GM12878 (cell line): ENCODE measurements at regions of chr1 and their contacts with region 1.

Region 1: GRCh38 chr1:200837931-200838571 is 34.7 kb upstream of the GPR25 start:
- DNase-seq: no peak
- ATAC-seq: 0 out of 3 replicates have a peak, but pooled peaks have one; percentile 42
- H3K4me3 ChIP-seq: no peak overlapping the region
- H3K27ac ChIP-seq: no peak overlapping the region
- H3K4me1 ChIP-seq: no peaks in the 10 kb centered on the region
- H3K27me3 ChIP-seq: no peaks in the 10 kb centered on the region
- CTCF ChIP-seq: peak in 1 of 3 experiments; percentile 2; a peak in 2 of 6 replicates
- EP300 ChIP-seq: no peak
- POLR2A ChIP-seq: no peak
- RAD21 ChIP-seq: peak; percentile 28; the same call in 1 of the 2 replicates

Region 2: DNA sequence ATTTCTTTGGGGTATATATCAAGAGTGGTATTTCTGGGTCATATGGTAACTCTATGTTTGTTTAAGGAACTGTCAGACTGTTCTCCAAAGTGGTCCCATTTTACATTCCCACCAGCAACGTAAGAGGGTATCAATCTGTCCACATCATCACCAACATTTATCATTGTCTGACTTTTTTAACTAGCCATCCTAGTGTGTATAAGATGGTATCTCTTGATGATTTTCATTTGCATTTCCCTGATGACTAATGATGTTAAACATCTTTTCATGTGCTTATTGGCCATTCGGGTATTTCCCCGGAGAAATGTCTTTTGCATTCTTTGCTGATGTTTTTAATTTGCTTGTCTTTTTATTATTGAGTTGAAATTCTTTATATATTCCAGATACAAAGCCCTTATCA is 1180.6 kb before region 1 on chr1:
- CTCF ChIA-PET with region 1: no interaction called
- POLR2A ChIA-PET with region 1: no interaction called
- RAD21 ChIA-PET with region 1: no interaction called
- SMC1A ChIA-PET with region 1: no interaction called
- in situ Hi-C with region 1: no loop called
- intact Hi-C with region 1: no loop called
- DNase-seq: no peak
- ATAC-seq: no peak
- H3K4me3 ChIP-seq: no peak overlapping the region
- H3K27ac ChIP-seq: no peak overlapping the region
- H3K4me1 ChIP-seq: no peaks in the 10 kb centered on the region
- H3K27me3 ChIP-seq: no peaks in the 10 kb centered on the region
- CTCF ChIP-seq: no peak
- EP300 ChIP-seq: no peak
- POLR2A ChIP-seq: no peak
- RAD21 ChIP-seq: no peak

Region 3: DNA sequence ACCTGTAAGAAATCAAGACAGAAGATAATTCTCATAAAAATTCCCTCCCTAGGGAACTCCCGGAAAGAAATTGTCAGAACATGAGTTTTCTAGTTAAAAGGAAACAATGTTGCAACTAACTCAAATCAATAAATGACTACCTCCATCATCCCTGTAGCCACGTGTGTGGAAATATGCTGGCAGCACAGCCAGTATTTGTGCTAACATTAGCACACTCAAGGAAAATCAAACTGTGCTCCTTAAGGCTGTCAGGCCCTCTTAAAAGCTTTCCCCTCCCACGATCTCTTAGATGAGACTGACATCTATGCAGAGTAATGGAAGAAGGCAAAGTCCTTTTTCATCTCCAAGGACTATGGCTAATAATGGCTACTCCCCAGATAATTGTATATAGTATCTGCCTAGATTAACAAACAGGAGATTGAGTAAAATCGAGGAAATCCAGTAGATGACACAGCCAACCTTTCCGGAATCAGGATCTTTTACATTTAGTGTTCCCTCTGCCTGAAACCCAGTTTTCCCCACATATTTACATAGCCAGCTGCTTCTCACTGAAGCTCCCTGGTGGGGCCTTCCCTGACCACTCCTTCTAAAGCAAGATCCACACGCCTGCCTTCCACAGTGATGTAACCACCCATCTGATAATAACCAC is 861.4 kb before region 1 on chr1:
- CTCF ChIA-PET with region 1: no interaction called
- POLR2A ChIA-PET with region 1: interaction called, 11 read pairs
- RAD21 ChIA-PET with region 1: no interaction called
- SMC1A ChIA-PET with region 1: no interaction called
- in situ Hi-C with region 1: no loop called
- intact Hi-C with region 1: no loop called
- DNase-seq: no peak
- ATAC-seq: no peak; the same call in 1 of the 3 replicates
- H3K4me3 ChIP-seq: no peak overlapping the region
- H3K27ac ChIP-seq: no peak overlapping the region
- H3K4me1 ChIP-seq: peaks cover 6% of the 10 kb centered on the region
- H3K27me3 ChIP-seq: peaks cover 0 to 3% of the 10 kb centered on the region in 2 experiments; a peak in 2 of 4 replicates
- CTCF ChIP-seq: no peak
- EP300 ChIP-seq: no peak
- POLR2A ChIP-seq: no peak
- RAD21 ChIP-seq: no peak

Region 4: GRCh38 chr1:200856716-200857352 is 18.8 kb after region 1 on chr1:
- CTCF ChIA-PET with region 1: interaction called, 6 read pairs
- POLR2A ChIA-PET with region 1: interaction called, 3 read pairs
- RAD21 ChIA-PET with region 1: interaction called, 3 read pairs
- SMC1A ChIA-PET with region 1: interaction called, 12 read pairs
- in situ Hi-C with region 1: no loop called
- intact Hi-C with region 1: no loop called
- DNase-seq: no peak
- ATAC-seq: no peak; the same call in 2 of the 3 replicates
- H3K4me3 ChIP-seq: no peak overlapping the region
- H3K27ac ChIP-seq: no peak overlapping the region
- H3K4me1 ChIP-seq: peaks cover 3% of the 10 kb centered on the region
- H3K27me3 ChIP-seq: no peaks in the 10 kb centered on the region
- CTCF ChIP-seq: no peak
- EP300 ChIP-seq: no peak
- POLR2A ChIP-seq: no peak
- RAD21 ChIP-seq: no peak

Region 5: DNA sequence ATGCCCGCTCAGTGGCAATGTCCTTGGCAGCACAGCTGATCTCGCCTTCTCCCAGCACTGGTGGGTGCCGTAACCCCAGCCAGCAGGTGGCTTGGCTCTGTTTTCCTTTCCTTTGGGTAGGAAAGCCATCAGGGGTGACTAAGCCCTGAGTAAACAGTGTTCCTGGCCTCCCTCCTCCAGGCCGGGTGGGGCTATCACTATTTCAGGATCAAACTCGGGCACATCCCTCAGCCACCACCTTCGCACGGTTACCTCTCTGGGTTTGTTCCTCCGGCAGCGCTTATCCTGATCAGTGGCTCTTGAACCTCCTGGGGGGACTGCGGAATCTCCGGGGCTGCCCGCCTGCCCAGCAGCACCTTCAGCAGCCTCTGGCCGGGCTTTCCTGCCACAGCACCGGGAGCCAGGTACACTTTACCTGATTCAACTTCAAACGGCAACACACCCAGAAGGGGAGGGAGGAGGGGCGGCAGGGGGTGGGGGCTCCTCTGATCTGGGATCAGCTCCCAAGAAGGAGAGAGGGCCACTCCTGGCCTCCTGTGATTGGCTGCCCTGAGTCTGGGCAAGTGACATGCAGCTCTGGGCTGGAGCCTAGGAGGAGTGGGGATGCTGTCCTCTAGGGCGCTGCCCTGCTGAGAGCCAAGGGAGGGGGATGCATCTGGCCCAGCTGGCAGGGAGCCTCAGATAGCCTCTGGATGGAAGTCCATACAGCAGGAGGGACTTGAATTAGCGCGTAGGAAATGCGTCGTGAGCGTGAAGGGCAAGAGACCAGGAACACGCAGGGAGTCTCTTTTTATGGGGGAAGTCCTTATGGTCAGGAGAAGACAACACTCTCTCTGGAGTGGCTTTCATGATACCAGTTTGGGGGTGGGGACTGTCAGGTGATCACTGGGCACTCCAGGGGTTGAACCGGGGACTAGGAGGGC is 289.0 kb after region 1 on chr1 and contains the start of gene ASCL5:
- CTCF ChIA-PET with region 1: no interaction called
- POLR2A ChIA-PET with region 1: no interaction called
- RAD21 ChIA-PET with region 1: no interaction called
- SMC1A ChIA-PET with region 1: no interaction called
- in situ Hi-C with region 1: no loop called
- intact Hi-C with region 1: no loop called
- DNase-seq: no peak
- ATAC-seq: no peak
- H3K4me3 ChIP-seq: no peak within 1 kb of the TSS
- H3K27ac ChIP-seq: no peak within 1 kb of the TSS
- H3K4me1 ChIP-seq: no peaks in the 10 kb centered on the region
- H3K27me3 ChIP-seq: peaks cover 0 to 1% of the 10 kb centered on the region in 2 experiments; a peak in 2 of 4 replicates
- CTCF ChIP-seq: no peak
- EP300 ChIP-seq: no peak
- POLR2A ChIP-seq: no peak
- RAD21 ChIP-seq: no peak
- polyA plus RNA-seq, gene ASCL5: not detected